Breast epithelium (tissue), 4 donors: ENCODE measurements at regions of chr14 and their contacts with region 1.

Region 1: DNA sequence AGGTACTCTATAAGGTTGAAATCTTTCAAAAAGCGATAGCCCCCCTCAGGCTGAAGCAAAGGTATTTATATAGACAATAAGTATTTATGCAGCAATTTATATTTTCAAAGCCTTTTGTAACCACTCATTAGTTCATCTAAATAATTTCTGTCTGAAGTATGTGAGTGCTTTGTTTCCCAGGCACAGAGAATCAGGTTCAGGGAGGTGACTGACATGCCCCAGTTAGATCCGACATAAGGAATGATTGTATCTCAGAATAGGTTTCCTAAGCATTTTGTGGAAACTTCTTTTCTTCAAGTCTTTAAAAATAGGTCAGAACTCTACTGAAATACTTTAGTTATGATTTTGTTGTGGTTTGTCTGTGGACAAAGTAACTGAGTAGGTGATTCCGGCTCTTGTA is 283.4 kb upstream of the G2E3 start:
- DNase-seq: no peak
- H3K4me3 ChIP-seq: no peak overlapping the region
- H3K27ac ChIP-seq: no peak overlapping the region
- H3K4me1 ChIP-seq: no peaks in the 10 kb centered on the region
- H3K27me3 ChIP-seq: no peaks in the 10 kb centered on the region
- CTCF ChIP-seq: no peak
- POLR2A ChIP-seq: no peak

Region 2: DNA sequence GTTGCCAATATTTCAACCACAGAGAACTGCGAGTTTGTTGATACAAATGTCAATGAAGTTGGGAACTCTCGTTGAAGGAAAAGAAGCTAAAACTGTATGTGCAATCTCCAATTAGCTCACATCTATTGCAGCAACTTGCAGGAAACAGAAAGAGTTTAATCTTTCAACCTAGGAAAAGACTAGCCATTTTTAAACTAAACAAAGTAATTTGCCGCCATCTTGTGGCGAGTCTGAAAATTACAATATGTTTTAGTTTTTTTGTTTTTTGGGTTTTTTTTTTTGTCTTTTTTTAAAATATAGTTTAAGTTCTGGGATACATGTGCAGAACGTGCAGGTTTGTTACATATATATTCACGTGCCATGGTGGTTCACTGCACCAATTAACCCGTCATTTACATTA is 1640.2 kb before region 1 on chr14:
- intact Hi-C with region 1: no loop called
- DNase-seq: no peak
- H3K4me3 ChIP-seq: no peak overlapping the region
- H3K27ac ChIP-seq: no peak overlapping the region
- H3K4me1 ChIP-seq: no peaks in the 10 kb centered on the region
- H3K27me3 ChIP-seq: no peaks in the 10 kb centered on the region
- CTCF ChIP-seq: peak in 1 of 3 donors; percentile 41
- POLR2A ChIP-seq: no peak

Region 3: GRCh38 chr14:30230719-30231118 is 44.9 kb before region 1 on chr14:
- intact Hi-C with region 1: loop called (anchors 2 kb)
- DNase-seq: no peak
- H3K4me3 ChIP-seq: no peak overlapping the region
- H3K27ac ChIP-seq: no peak overlapping the region
- H3K4me1 ChIP-seq: no peaks in the 10 kb centered on the region
- H3K27me3 ChIP-seq: no peaks in the 10 kb centered on the region
- CTCF ChIP-seq: no peak
- POLR2A ChIP-seq: no peak